ENCODE measurements at regions of chr5 and their contacts with region 1.

Region 1: GRCh38 chr5:55159763-55160492 is at the start of gene GPX8:
- DNase-seq: no peak
- ATAC-seq: peak; percentile 90
- total RNA-seq, gene GPX8: 4.6 TPM

Region 2: GRCh38 chr5:54944364-54944763 is 215.6 kb before region 1 on chr5:
- intact Hi-C with region 1: loop called (anchors 10 kb)
- DNase-seq: no peak
- ATAC-seq: no peak